IMR-90 (cell line): ENCODE measurements at regions of chr11 and their contacts with region 1.

Region 1: GRCh38 chr11:70202898-70203748 is at the start of gene FADD:
- DNase-seq: peak; percentile 92
- ATAC-seq: peak; percentile 73
- H3K4me3 ChIP-seq: peak within 1 kb of the TSS; percentile 66
- H3K27ac ChIP-seq: peak within 1 kb of the TSS; percentile 94
- H3K4me1 ChIP-seq: peaks cover 3% of the 10 kb centered on the region; the same call in 1 of the 2 replicates
- H3K27me3 ChIP-seq: no peaks in the 10 kb centered on the region
- CTCF ChIP-seq: no peak
- POLR2A ChIP-seq: peak; percentile 85
- RAD21 ChIP-seq: no peak
- total RNA-seq, gene FADD: 44.4 and 47.2 TPM in 2 replicates

Region 2: DNA sequence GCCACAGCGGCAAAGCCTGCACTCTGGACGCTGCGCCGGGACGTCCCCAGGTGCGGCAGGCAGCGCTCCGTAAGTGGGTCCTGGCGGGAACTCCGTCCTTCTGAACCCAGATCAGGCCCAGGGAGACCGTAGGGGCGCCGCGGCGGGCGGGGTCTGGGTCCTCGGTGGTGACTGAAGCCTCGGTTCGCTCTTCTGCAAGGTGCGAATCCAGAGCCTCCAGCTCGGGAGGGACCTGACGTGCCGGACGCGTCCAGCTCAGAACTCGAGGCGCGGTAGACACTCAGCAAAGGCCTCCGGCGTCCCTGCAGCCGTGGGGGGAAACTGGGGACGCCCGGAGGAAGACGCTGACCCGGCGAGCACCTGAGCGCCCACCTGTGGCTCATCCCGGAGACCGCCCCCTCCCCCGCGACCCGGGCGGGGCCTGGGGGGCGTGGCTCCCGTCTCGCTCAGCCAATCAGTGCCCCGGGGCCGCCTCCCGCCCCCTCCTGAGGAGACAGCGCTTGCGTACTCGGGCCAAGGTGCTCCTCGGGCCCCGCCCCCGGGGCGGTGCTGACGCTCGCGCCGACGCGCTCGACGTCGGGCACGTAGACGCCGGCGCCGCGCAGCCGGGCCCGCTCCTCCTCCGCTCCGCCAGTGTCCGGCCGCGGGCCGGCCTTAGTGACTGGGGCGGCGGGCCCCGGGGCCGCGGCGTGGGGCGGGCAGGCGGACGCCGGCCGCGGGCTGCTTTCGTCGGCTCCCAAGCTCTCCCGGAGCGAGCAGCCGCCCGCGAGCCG is 67.2 kb after region 1 on chr11 and contains the start of gene PPFIA1:
- CTCF ChIA-PET with region 1: no interaction called
- POLR2A ChIA-PET with region 1: no interaction called
- dilution Hi-C with region 1: no loop called
- in situ Hi-C with region 1: no loop called
- intact Hi-C with region 1: loop called (anchors 2 kb)
- DNase-seq: peak; percentile 91
- ATAC-seq: peak; percentile 98
- H3K4me3 ChIP-seq: peak within 1 kb of the TSS; percentile 96
- H3K27ac ChIP-seq: peak within 1 kb of the TSS; percentile 75
- H3K4me1 ChIP-seq: peaks cover 4% of the 10 kb centered on the region; the same call in 1 of the 2 replicates
- H3K27me3 ChIP-seq: peaks cover 15% of the 10 kb centered on the region
- CTCF ChIP-seq: no peak
- POLR2A ChIP-seq: peak; percentile 96
- RAD21 ChIP-seq: no peak
- total RNA-seq, gene PPFIA1: 25.6 and 33.9 TPM in 2 replicates

Region 3: GRCh38 chr11:70303070-70303469 is 99.9 kb after region 1 on chr11:
- CTCF ChIA-PET with region 1: no interaction called
- POLR2A ChIA-PET with region 1: no interaction called
- dilution Hi-C with region 1: no loop called
- in situ Hi-C with region 1: no loop called
- intact Hi-C with region 1: no loop called
- DNase-seq: peak; percentile 73
- ATAC-seq: peak; percentile 42
- H3K4me3 ChIP-seq: no peak overlapping the region
- H3K27ac ChIP-seq: peak overlapping the region; percentile 53; the same call in 1 of the 2 replicates
- H3K4me1 ChIP-seq: peaks cover 30% of the 10 kb centered on the region
- H3K27me3 ChIP-seq: no peaks in the 10 kb centered on the region
- CTCF ChIP-seq: no peak
- POLR2A ChIP-seq: no peak
- RAD21 ChIP-seq: no peak

Region 4: DNA sequence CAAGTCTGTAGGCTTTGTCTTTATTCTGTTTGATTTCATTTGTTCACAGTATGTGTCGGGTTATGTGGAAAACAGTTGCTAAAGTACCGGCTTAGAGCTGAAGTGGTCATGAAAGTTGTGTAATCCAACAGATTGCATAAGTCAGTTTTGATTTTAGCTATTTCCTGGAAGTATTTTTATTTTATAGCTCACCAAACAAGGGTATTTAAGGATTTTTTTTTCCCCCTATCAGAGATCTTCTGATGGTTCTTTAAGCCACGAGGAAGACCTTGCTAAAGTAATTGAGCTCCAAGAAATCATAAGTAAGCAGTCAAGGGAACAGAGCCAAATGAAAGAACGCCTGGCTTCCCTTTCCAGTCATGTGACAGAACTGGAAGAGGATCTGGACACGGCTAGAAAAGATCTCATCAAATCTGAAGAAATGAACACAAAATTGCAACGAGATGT is 123.3 kb after region 1 on chr11:
- CTCF ChIA-PET with region 1: no interaction called
- POLR2A ChIA-PET with region 1: no interaction called
- dilution Hi-C with region 1: no loop called
- in situ Hi-C with region 1: no loop called
- intact Hi-C with region 1: loop called (anchors 10 kb)
- DNase-seq: peak; percentile 70
- ATAC-seq: peak; percentile 46
- H3K4me3 ChIP-seq: no peak overlapping the region
- H3K27ac ChIP-seq: peak overlapping the region; percentile 81; the same call in 1 of the 2 replicates
- H3K4me1 ChIP-seq: peaks cover 14% of the 10 kb centered on the region
- H3K27me3 ChIP-seq: no peaks in the 10 kb centered on the region
- CTCF ChIP-seq: no peak
- POLR2A ChIP-seq: no peak
- RAD21 ChIP-seq: no peak

Region 5: GRCh38 chr11:70381872-70382861 is 179.0 kb after region 1 on chr11:
- CTCF ChIA-PET with region 1: no interaction called
- POLR2A ChIA-PET with region 1: no interaction called
- dilution Hi-C with region 1: no loop called
- in situ Hi-C with region 1: no loop called
- intact Hi-C with region 1: loop called (anchors 1 kb)
- DNase-seq: peak; percentile 95
- ATAC-seq: peak; percentile 94
- H3K4me3 ChIP-seq: peak overlapping the region; percentile 2; the same call in 1 of the 2 replicates
- H3K27ac ChIP-seq: peak overlapping the region; percentile 94
- H3K4me1 ChIP-seq: peaks cover 18% of the 10 kb centered on the region
- H3K27me3 ChIP-seq: no peaks in the 10 kb centered on the region
- CTCF ChIP-seq: peak; percentile 37; the same call in 1 of the 2 replicates
- POLR2A ChIP-seq: no peak
- RAD21 ChIP-seq: peak; percentile 46

Region 6: GRCh38 chr11:70397983-70398833 is 195.1 kb after region 1 on chr11 and contains the start of gene CTTN:
- CTCF ChIA-PET with region 1: no interaction called
- POLR2A ChIA-PET with region 1: no interaction called
- dilution Hi-C with region 1: no loop called
- in situ Hi-C with region 1: no loop called
- intact Hi-C with region 1: loop called (anchors 5 kb)
- DNase-seq: peak; percentile 85
- ATAC-seq: peak; percentile 85
- H3K4me3 ChIP-seq: peak within 1 kb of the TSS; percentile 81
- H3K27ac ChIP-seq: peak within 1 kb of the TSS; percentile 99
- H3K4me1 ChIP-seq: peaks cover 14% of the 10 kb centered on the region
- H3K27me3 ChIP-seq: no peaks in the 10 kb centered on the region
- CTCF ChIP-seq: no peak
- POLR2A ChIP-seq: peak; percentile 89
- RAD21 ChIP-seq: 0 out of 2 replicates have a peak, but pooled peaks have one; percentile 3
- total RNA-seq, gene CTTN: 287 and 341 TPM in 2 replicates

Region 7: GRCh38 chr11:70415184-70415583 is 212.1 kb after region 1 on chr11:
- CTCF ChIA-PET with region 1: no interaction called
- POLR2A ChIA-PET with region 1: no interaction called
- dilution Hi-C with region 1: no loop called
- in situ Hi-C with region 1: no loop called
- intact Hi-C with region 1: loop called (anchors 5 kb)
- DNase-seq: peak; percentile 96
- ATAC-seq: peak; percentile 93
- H3K4me3 ChIP-seq: no peak overlapping the region
- H3K27ac ChIP-seq: peak overlapping the region; percentile 11; the same call in 1 of the 2 replicates
- H3K4me1 ChIP-seq: peaks cover 6% of the 10 kb centered on the region
- H3K27me3 ChIP-seq: no peaks in the 10 kb centered on the region
- CTCF ChIP-seq: peak; percentile 73
- POLR2A ChIP-seq: no peak
- RAD21 ChIP-seq: peak; percentile 67